ENCODE measurements at regions of chr7 and their contacts with region 1.

Region 1: DNA sequence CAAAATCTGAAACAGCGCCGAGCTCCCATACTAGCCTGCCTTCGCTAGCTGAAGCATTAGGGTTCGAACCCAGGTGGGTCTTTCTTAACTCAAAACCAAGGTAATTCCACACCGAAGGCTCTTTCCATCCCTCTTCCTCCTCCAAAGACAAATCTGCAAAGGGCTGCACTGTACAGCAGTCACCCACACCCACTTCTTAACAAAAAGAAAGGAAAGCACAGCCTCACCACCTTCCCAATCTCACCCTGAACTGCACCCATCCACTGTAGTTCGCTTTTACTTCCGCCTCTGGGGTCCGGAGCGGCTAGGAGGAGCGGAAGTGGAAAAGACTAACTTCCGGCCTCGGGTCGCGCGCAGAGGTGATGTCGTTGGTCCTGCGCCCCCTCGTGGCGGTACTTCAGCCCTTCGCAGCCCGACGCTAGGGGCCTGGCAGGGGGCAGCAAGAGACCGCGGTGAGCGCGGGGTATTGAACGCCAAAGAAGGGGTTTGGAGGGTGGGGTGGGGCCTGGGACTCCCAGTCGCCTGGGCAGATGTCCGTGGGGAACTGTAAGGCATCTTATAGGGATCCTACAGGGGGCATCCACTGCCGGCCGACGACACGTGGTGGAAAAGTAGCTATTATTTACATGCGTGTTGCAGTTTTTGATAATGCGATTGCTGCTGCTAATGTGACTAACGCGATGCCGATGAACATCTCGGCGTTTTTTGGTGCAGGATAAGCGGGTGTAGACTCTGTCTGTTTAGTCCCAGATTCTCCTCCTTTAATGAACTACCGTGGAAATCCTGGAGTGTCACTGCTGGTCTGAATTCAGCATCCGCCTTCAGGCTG is at the start of gene MTERF1:
- DNase-seq: peak; percentile 88
- ATAC-seq: peak; percentile 96
- H3K4me3 ChIP-seq: peak within 1 kb of the TSS; percentile 97
- H3K27ac ChIP-seq: peak within 1 kb of the TSS; percentile 77
- H3K4me1 ChIP-seq: no peaks in the 10 kb centered on the region
- H3K27me3 ChIP-seq: no peaks in the 10 kb centered on the region
- CTCF ChIP-seq: peak; percentile 100
- POLR2A ChIP-seq: peak; percentile 45; the same call in 1 of the 2 replicates
- RAD21 ChIP-seq: peak; percentile 73
- total RNA-seq, gene MTERF1: 7.0 and 16.7 TPM in 2 replicates

Region 2: GRCh38 chr7:91082852-91083495 is 797.7 kb before region 1 on chr7:
- CTCF ChIA-PET with region 1: no interaction called
- POLR2A ChIA-PET with region 1: no interaction called
- dilution Hi-C with region 1: no loop called
- in situ Hi-C with region 1: loop called (anchors 10 kb)
- intact Hi-C with region 1: loop called (anchors 2 kb)
- DNase-seq: peak; percentile 62
- ATAC-seq: peak; percentile 43; the same call in 1 of the 2 replicates
- H3K4me3 ChIP-seq: no peak overlapping the region
- H3K27ac ChIP-seq: peak overlapping the region; percentile 13; the same call in 1 of the 2 replicates
- H3K4me1 ChIP-seq: 0 out of 2 replicates have a peak, but pooled peaks cover 2% of the 10 kb centered on the region
- H3K27me3 ChIP-seq: no peaks in the 10 kb centered on the region
- CTCF ChIP-seq: peak; percentile 70
- POLR2A ChIP-seq: no peak
- RAD21 ChIP-seq: peak; percentile 69

Region 3: DNA sequence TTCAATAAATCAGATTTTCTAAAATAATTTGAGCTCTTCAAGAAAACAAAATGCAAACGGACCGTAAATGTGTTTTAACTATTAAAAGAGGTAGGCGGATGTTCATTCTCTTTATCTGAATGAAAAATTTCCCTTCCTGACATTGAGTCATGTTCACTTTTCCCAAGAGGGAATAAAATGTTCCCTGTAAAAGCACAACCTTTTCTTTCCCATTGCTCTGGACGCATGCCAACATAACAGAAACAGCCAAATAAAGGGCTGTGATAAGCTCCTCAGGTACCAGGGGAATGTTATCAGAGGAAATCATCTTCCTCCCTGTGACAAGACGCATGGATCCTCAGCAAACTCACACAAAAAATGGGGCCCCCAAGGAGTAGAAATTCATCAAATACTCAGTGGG is 251.9 kb before region 1 on chr7:
- CTCF ChIA-PET with region 1: no interaction called
- POLR2A ChIA-PET with region 1: no interaction called
- dilution Hi-C with region 1: no loop called
- in situ Hi-C with region 1: no loop called
- intact Hi-C with region 1: no loop called
- DNase-seq: no peak
- ATAC-seq: no peak
- H3K4me3 ChIP-seq: no peak overlapping the region
- H3K27ac ChIP-seq: no peak overlapping the region
- H3K4me1 ChIP-seq: no peaks in the 10 kb centered on the region
- H3K27me3 ChIP-seq: no peaks in the 10 kb centered on the region
- CTCF ChIP-seq: no peak
- POLR2A ChIP-seq: no peak
- RAD21 ChIP-seq: no peak

Region 4: GRCh38 chr7:91835846-91836368 is 44.7 kb before region 1 on chr7:
- CTCF ChIA-PET with region 1: interaction called, 11 read pairs
- POLR2A ChIA-PET with region 1: no interaction called
- dilution Hi-C with region 1: no loop called
- in situ Hi-C with region 1: no loop called
- intact Hi-C with region 1: no loop called
- DNase-seq: peak; percentile 81
- ATAC-seq: peak; percentile 69
- H3K4me3 ChIP-seq: no peak overlapping the region
- H3K27ac ChIP-seq: no peak overlapping the region
- H3K4me1 ChIP-seq: no peaks in the 10 kb centered on the region
- H3K27me3 ChIP-seq: no peaks in the 10 kb centered on the region
- CTCF ChIP-seq: no peak
- POLR2A ChIP-seq: no peak
- RAD21 ChIP-seq: no peak

Region 5: GRCh38 chr7:91940572-91941341 is 60.1 kb after region 1 on chr7 and contains the start of gene AKAP9:
- CTCF ChIA-PET with region 1: interaction called, 3 read pairs
- POLR2A ChIA-PET with region 1: no interaction called
- dilution Hi-C with region 1: no loop called
- in situ Hi-C with region 1: no loop called
- intact Hi-C with region 1: loop called (anchors 2 kb)
- DNase-seq: peak; percentile 57
- ATAC-seq: peak; percentile 86
- H3K4me3 ChIP-seq: peak within 1 kb of the TSS; percentile 80
- H3K27ac ChIP-seq: peak within 1 kb of the TSS; percentile 98
- H3K4me1 ChIP-seq: peaks cover 2% of the 10 kb centered on the region; the same call in 1 of the 2 replicates
- H3K27me3 ChIP-seq: no peaks in the 10 kb centered on the region
- CTCF ChIP-seq: no peak
- POLR2A ChIP-seq: peak; percentile 70; the same call in 1 of the 2 replicates
- RAD21 ChIP-seq: no peak
- total RNA-seq, gene AKAP9: 25.3 and 49.4 TPM in 2 replicates

Region 6: GRCh38 chr7:92043637-92044036 is 163.0 kb after region 1 on chr7:
- CTCF ChIA-PET with region 1: interaction called, 3 read pairs
- POLR2A ChIA-PET with region 1: no interaction called
- dilution Hi-C with region 1: no loop called
- in situ Hi-C with region 1: no loop called
- intact Hi-C with region 1: loop called (anchors 1 kb)
- DNase-seq: no peak
- ATAC-seq: peak; percentile 27; the same call in 1 of the 2 replicates
- H3K4me3 ChIP-seq: no peak overlapping the region
- H3K27ac ChIP-seq: no peak overlapping the region; the same call in 1 of the 2 replicates
- H3K4me1 ChIP-seq: 0 out of 2 replicates have a peak, but pooled peaks cover 2% of the 10 kb centered on the region
- H3K27me3 ChIP-seq: no peaks in the 10 kb centered on the region
- CTCF ChIP-seq: no peak
- POLR2A ChIP-seq: no peak
- RAD21 ChIP-seq: no peak

Region 7: DNA sequence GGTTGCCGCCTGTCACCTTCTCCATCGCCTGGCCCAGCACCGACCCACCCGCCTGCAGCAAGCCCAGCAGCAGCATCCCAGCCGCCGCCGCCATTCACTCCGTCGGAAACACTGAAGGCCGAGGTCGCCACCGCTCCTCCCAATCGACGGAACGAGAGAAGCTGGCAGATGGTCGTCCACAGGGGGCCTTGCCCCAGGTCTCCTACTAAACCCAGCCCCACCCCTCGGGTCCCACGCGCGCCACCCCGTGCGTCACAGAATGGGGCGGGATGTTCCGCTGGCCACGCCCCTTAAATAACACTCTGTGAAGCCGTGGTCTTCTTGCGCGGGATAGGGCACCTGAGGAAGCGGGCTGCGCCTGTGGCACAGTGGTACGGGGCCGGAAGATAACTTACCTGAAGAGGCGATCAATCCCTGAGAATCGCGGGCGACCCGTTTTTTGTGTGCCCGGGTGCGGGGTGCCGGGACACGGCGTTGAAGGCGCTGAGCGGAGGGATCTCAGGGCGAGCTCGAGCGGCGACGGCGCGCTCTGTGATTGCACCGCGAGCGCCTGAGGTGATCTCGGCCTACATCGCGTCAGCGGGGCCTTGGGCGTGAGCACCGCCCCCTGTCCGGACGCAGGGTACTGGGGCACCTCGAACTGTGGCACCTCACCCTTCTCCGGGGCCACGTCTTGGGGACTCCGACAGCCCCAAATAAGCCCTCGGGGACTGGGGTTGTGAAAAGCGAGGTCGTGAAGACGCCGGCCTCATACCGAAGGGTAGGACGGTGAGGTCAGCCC is 253.8 kb after region 1 on chr7 and contains the start of gene CYP51A1:
- CTCF ChIA-PET with region 1: interaction called, 3 read pairs
- POLR2A ChIA-PET with region 1: no interaction called
- dilution Hi-C with region 1: no loop called
- in situ Hi-C with region 1: no loop called
- intact Hi-C with region 1: loop called (anchors 10 kb)
- DNase-seq: peak; percentile 86
- ATAC-seq: peak; percentile 90
- H3K4me3 ChIP-seq: peak within 1 kb of the TSS; percentile 80
- H3K27ac ChIP-seq: peak within 1 kb of the TSS; percentile 94
- H3K4me1 ChIP-seq: no peaks in the 10 kb centered on the region
- H3K27me3 ChIP-seq: no peaks in the 10 kb centered on the region
- CTCF ChIP-seq: no peak
- POLR2A ChIP-seq: peak; percentile 73
- RAD21 ChIP-seq: no peak
- total RNA-seq, gene CYP51A1: 76.4 and 92.8 TPM in 2 replicates

Region 8: GRCh38 chr7:92456236-92456635 is 575.6 kb after region 1 on chr7:
- CTCF ChIA-PET with region 1: no interaction called
- POLR2A ChIA-PET with region 1: no interaction called
- dilution Hi-C with region 1: no loop called
- in situ Hi-C with region 1: loop called (anchors 10 kb)
- intact Hi-C with region 1: no loop called
- DNase-seq: peak; percentile 46
- ATAC-seq: no peak
- H3K4me3 ChIP-seq: no peak overlapping the region
- H3K27ac ChIP-seq: no peak overlapping the region
- H3K4me1 ChIP-seq: no peaks in the 10 kb centered on the region
- H3K27me3 ChIP-seq: no peaks in the 10 kb centered on the region
- CTCF ChIP-seq: no peak
- POLR2A ChIP-seq: no peak
- RAD21 ChIP-seq: no peak

Measured in IMR-90 (cell line).